ENCODE measurements at regions of chr2 and their contacts with region 1.

Region 1: GRCh38 chr2:17672583-17673317 is 80.9 kb downstream of the SMC6 start:
- H3K4me3 ChIP-seq: no peak overlapping the region
- H3K27ac ChIP-seq: no peak overlapping the region
- H3K4me1 ChIP-seq: no peaks in the 10 kb centered on the region
- CTCF ChIP-seq: no peak

Region 2: GRCh38 chr2:17470855-17471641 is 201.7 kb before region 1 on chr2:
- CTCF ChIA-PET with region 1: interaction called, 37 read pairs
- POLR2A ChIA-PET with region 1: no interaction called
- H3K4me3 ChIP-seq: no peak overlapping the region
- H3K27ac ChIP-seq: no peak overlapping the region
- H3K4me1 ChIP-seq: no peaks in the 10 kb centered on the region
- CTCF ChIP-seq: peak; percentile 25; the same call in 1 of the 2 replicates

Region 3: GRCh38 chr2:17646081-17646554 is 26.6 kb before region 1 on chr2:
- CTCF ChIA-PET with region 1: interaction called, 43 read pairs
- POLR2A ChIA-PET with region 1: no interaction called
- H3K4me3 ChIP-seq: no peak overlapping the region
- H3K27ac ChIP-seq: no peak overlapping the region
- H3K4me1 ChIP-seq: peaks cover 5% of the 10 kb centered on the region
- CTCF ChIP-seq: peak; percentile 29; the same call in 1 of the 2 replicates

Region 4: DNA sequence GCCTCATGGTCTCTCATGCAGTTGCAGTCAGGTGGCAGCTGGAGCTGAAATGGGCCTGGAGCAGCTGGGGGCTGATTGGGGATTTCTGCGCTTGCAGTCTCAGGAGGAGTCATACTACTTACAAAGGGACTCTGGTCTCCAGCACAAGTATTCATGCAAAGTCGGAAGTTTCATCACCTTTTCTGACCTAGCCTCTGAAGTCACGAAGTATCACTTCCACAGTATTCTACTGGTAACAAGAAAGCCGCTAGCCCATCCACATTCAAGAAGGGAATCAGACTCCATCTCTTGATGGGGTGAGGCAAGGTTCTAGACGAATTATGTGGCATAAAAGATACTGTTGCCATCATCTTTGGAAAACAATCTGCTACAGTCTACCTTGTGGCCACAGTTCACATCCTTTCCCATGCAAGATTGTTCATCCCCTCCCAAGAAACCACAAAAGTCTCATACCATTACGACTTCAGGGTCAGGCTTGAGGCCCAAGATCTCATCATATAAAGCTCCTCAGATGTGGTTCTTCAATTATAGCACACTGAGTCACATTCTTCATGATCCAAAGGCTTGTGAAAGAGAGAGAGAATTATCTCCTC is 14.4 kb before region 1 on chr2:
- CTCF ChIA-PET with region 1: interaction called, 18 read pairs
- POLR2A ChIA-PET with region 1: interaction called, 8 read pairs
- H3K4me3 ChIP-seq: no peak overlapping the region
- H3K27ac ChIP-seq: no peak overlapping the region
- H3K4me1 ChIP-seq: no peaks in the 10 kb centered on the region
- CTCF ChIP-seq: no peak